Calu3 (cell line): ENCODE measurements at regions of chr7 and their contacts with region 1.

Region 1: DNA sequence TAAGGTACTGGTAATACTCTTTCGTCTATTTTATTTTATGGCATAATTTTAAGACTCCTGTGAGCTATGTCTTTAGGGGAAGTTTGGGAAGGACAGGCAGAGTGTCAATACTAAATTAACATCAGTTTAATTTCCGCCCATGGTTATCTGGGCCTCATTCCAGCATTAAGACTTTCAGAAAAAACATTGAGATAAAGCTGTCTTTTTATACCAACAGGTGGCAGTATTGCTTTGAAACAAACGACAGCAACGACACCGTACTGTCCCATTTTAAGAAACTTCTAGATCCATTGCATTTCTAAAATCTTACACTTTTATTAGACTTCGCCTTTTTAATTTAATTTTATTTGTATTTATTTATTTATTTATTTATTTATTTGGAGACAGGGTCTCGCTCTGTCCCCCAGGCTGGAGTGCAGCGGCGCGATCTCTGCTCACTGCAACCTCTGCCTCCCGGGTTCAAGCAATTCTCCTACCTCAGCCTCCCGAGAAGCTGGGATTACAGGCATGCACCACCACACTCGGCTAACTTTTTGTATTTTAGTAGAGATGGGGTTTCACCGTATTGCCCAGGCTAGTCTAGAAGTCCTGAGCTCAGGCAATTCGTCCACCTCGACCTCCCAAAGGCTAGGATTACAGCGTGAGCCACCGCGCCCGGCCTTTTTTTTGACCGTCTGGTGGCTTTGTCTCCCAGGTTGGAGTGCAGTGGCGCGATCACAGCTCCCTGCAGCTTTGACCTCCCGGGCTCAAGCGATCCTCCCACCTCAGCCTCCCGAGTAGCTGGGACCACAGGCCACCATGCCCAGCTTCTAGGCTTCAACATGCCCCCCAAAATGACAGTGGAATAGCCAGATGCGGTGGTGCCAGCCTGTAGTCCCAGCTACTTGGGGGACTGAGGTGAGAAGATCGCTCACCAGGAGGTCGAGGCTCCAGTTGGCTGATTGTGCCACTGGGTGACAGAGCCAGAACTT is 78.7 kb upstream of the C1GALT1 start:
- DNase-seq: peak; percentile 20
- H3K4me3 Mint-ChIP-seq: peak overlapping the region; percentile 46
- H3K27ac Mint-ChIP-seq: peak overlapping the region; percentile 38
- H3K4me1 Mint-ChIP-seq: peaks cover 27% of the 10 kb centered on the region
- H3K27me3 Mint-ChIP-seq: no peaks in the 10 kb centered on the region
- CTCF ChIP-seq: peak; percentile 63

Region 2: DNA sequence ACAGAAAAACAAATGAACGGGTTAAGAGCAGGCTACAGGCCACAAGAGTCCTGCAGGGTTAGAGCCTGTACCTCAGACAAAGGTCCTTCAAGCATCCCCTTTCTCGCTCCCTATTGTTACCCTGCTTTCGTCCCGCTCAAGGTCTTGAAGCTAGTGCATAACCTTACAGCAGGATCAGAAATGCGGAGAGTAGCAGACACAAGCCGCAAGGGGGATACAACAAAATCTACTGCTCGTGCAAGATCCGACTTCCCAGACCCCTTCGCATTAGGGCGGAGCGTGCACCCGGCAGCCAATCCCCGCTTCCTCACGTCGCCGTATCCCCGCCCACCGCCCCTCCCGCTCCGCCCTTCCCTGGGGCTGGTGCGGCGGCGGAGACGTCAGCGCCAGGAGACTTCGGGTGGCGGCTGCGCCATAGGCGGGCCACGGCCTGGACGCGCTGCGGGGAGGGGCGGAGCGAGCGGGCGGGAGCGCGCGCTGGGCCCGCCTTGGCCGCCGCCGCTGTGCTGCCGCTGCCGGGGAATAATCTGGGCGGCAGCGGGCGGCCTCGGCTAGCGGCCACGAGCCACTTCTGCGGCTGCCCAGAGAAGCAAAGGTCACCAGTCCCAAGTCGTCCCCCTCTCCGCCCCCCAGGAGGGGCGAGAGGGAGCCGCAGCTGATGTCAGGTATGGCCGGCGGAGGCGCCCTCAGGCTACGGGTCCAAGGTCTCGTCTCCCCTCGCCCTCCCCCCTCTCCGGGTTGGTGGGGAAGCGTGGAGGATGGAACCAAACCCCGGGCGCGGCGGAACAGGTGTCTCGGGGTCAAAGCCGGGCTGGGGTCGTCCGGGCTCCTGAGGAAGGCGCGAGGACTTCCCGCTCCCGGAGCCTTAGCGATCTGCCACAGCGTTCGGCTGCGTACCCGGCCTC is 78.8 kb after region 1 on chr7 and contains the start of gene C1GALT1:
- CTCF ChIA-PET with region 1: interaction called, 15 read pairs
- intact Hi-C with region 1: no loop called
- DNase-seq: peak; percentile 99
- H3K4me3 Mint-ChIP-seq: peak within 1 kb of the TSS; percentile 90
- H3K27ac Mint-ChIP-seq: peak within 1 kb of the TSS; percentile 96
- H3K4me1 Mint-ChIP-seq: peaks cover 48% of the 10 kb centered on the region
- H3K27me3 Mint-ChIP-seq: no peaks in the 10 kb centered on the region
- CTCF ChIP-seq: peak; percentile 25
- total RNA-seq, gene C1GALT1: 92.2 and 97.0 TPM in 2 replicates

Region 3: GRCh38 chr7:7257899-7258692 is 154.5 kb after region 1 on chr7:
- CTCF ChIA-PET with region 1: interaction called, 3 read pairs
- intact Hi-C with region 1: loop called (anchors 5 kb)
- DNase-seq: no peak
- H3K4me3 Mint-ChIP-seq: no peak overlapping the region
- H3K27ac Mint-ChIP-seq: no peak overlapping the region
- H3K4me1 Mint-ChIP-seq: no peaks in the 10 kb centered on the region
- H3K27me3 Mint-ChIP-seq: no peaks in the 10 kb centered on the region
- CTCF ChIP-seq: no peak

Region 4: DNA sequence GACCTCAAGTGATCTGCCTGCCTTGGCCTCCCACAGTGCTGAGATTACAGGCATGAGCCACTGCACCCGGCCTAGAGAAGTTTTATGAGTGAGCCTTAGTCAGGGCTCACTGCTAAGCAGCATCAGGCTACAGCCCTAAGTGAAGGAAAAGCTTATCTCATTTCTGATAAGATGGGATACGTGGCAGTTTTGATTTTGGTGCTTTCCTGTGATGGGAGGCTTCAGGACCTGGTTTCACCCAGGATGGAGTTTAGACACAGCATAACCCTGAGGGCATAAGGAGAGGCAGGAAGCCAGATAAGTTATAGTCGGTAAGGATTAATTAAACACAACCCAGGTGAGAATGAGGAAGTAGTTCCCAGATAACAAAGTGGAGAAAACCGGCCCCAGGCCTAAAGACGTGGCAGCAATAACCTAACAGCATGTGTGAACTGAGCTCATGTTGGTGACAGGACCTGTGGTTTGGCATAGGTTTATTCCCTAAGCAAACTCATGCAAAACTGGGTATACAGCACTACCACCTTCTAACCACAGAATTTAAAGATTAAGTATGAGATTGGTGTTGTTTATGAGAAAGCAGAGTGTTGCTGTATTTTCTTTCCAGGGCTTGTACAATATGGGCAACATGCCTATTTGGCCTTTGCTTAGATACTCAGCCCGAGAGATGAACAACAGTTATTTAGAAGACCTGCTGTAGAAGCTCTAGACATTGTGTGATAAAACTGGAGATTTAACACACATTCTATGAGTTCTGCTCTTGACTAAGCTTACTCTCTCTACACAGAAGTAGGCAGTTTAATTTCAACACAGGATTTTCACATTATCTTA is 312.6 kb after region 1 on chr7:
- CTCF ChIA-PET with region 1: interaction called, 13 read pairs
- intact Hi-C with region 1: loop called (anchors 2 kb)
- DNase-seq: peak; percentile 83
- H3K4me3 Mint-ChIP-seq: peak overlapping the region; percentile 7
- H3K27ac Mint-ChIP-seq: peak overlapping the region; percentile 53
- H3K4me1 Mint-ChIP-seq: peaks cover 38% of the 10 kb centered on the region
- H3K27me3 Mint-ChIP-seq: no peaks in the 10 kb centered on the region
- CTCF ChIP-seq: no peak